Sciatic nerve (tissue), 2 donors: ENCODE measurements at regions of chr17 and their contacts with region 1.

Region 1: DNA sequence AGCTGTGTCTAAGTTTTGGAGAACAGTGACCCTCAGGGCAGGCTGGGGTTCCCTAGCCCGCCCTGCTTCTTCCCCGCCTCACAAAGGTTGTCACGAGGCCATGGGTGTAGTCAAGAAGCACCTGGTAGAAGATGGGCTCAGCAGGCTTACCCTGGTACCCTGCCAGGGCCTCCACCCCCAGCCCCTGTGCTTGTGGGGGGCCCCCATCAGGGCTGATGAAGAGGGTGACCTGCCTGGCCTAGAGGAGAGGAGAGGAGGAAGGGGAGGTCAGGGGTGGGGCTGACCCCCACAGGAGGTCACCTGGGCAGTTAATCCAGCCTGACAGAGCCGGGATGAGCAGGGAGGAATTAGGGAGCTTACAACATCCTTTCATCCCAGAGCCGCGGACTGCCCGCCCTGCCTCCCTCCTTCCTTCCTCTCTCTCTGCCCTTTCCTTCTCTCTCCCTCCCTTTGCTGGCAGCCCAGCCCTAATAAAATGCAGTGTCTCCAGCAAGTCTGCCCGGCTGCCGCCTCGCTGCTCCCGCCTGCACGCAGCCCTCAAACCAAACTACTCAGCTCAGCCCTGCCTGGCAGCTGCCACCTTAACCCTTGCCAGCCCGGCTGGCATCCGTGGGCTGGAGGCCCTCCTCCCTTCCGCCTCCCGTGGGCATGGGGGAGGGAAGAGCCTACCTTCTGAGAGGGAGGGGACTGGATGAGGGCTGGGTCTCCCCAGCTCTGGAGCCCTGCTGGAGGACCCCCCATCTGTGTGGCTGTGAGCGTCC is 7.2 kb downstream of the DLX3 start:
- DNase-seq: peak; percentile 51
- ATAC-seq: no peak

Region 2: GRCh38 chr17:49162866-49163265 is 825.0 kb before region 1 on chr17:
- intact Hi-C with region 1: loop called (anchors 10 kb)
- DNase-seq: no peak
- ATAC-seq: no peak

Region 3: GRCh38 chr17:49438436-49439278 is 549.2 kb before region 1 on chr17:
- intact Hi-C with region 1: no loop called
- DNase-seq: no peak
- ATAC-seq: peak; percentile 32

Region 4: GRCh38 chr17:49956809-49957208 is 31.1 kb before region 1 on chr17:
- intact Hi-C with region 1: loop called (anchors 1 kb)
- DNase-seq: no peak
- ATAC-seq: no peak

Region 5: DNA sequence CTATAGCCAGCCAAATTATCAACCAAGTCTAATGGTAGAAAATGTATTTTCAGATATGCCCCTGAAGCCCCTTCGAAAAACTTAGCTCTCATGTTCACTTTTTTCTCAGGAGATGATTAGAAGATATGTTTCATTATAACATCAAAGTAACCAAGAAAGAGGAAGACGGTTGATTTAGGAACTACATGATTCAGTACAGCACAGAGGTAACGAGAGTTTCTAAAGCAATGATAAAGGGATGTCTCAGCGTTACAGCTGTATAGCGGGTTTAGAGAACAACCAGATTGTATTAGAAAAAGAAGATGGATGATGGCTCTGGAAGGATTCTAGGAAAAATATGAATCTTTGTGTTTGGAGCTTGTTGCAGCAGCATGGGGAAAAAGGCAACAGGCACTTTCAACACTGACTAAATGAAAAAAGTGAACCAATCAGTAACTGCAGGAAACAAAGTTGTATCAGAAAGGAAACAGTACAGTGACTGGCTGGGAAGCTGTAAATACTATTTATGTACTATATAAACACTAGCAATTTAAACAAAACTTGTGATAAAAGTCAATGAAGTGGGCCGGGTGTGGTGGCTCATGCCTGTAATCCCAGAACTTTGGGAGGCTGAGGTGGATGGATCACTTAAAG is 1250.5 kb after region 1 on chr17:
- intact Hi-C with region 1: no loop called
- DNase-seq: no peak
- ATAC-seq: no peak